ENCODE measurements at regions of chr16 and their contacts with region 1.

Region 1: GRCh38 chr16:67816240-67817031 is 9.7 kb downstream of the TSNAXIP1 start:
- DNase-seq: peak; percentile 91
- ATAC-seq: peak; percentile 98
- H3K4me3 Mint-ChIP-seq: no peak overlapping the region
- H3K27ac Mint-ChIP-seq: no peak overlapping the region
- H3K4me1 Mint-ChIP-seq: peaks cover 5% of the 10 kb centered on the region
- H3K27me3 Mint-ChIP-seq: peaks cover 5% of the 10 kb centered on the region

Region 2: DNA sequence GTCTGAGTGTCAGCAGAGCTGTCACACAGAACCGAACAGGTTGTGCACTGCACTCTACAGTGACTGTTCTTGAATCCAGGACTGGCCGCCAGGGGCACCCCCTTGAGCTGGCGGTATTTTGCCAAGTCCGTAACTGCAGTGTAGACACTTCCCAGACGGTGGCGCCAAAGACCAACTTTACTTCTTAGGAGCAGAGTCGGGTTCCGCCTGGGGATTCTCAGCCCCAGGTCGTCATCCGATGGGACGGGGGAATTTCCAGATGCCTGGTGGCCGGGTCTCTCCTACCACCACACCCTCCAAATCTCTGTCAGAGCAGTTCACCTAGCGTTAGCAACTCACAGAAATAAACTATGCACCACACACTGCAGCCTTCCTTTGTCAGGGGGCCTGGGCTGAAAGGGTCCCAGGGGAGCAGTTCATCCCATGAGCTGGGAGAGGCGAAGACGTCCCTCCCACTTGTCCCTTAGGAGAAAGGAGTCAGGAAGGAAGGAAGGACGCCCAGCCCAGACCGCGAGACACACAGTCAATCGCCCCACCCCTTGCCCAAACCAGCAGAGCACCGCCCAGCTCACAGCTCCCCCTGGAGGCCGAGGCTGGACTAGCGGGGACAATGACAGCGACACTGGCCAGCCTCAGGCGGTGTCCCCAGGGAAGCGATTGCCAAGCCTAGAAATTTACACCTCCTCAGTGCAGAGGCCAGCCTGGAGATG is 295.2 kb before region 1 on chr16:
- CTCF ChIA-PET with region 1: interaction called, 12 read pairs
- DNase-seq: peak; percentile 99
- ATAC-seq: peak; percentile 91
- H3K4me3 Mint-ChIP-seq: peak overlapping the region; percentile 81
- H3K27ac Mint-ChIP-seq: peak overlapping the region; percentile 96
- H3K4me1 Mint-ChIP-seq: peaks cover 36% of the 10 kb centered on the region
- H3K27me3 Mint-ChIP-seq: peaks cover 7% of the 10 kb centered on the region

Region 3: DNA sequence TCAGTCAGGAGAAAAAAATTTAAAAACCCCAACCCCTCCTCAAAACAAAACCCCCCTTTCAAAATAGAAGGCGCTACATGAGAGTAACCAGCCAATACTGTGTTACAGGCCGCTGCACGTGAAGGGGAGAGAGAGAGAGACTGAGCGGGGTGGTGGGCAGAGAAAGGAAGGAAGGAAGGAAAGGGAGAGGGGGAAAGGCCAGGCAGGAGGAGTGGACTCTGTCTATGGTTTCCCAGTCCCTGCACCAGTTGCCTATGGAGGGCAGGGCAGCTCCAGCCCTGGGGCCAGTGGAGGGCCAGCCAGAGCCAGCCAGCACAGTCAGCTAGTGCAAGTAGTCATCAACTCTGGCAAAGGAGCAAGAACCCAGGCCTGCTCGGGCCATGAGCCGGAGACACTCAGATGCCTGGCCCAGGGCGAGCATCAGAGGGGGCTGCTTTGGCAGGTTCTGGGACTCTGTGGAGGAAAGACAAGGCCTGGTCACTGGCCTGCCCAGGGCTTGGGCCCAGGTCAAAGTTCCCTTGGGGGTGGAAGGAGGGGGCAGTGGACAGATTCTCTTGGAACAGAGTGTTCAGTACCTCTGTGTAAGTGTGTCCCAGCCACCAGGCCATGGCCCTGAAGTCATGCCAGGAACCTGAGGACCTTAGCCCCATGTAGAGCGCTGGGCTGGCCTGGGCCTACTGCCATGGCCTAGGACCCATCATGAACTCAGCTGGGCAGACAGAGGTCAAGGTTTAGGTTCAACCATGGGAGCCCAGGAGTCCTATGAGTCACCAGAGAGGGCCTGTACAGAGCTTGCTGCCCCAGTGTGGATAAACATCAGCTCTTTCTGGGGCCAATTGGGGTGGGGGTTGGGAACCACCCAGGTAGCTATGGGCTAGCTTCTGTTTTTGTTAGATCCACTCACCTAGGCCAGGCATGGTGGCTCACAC is 90.1 kb before region 1 on chr16:
- CTCF ChIA-PET with region 1: interaction called, 10 read pairs
- DNase-seq: no peak
- ATAC-seq: no peak
- H3K4me3 Mint-ChIP-seq: no peak overlapping the region
- H3K27ac Mint-ChIP-seq: no peak overlapping the region
- H3K4me1 Mint-ChIP-seq: no peaks in the 10 kb centered on the region
- H3K27me3 Mint-ChIP-seq: no peaks in the 10 kb centered on the region

Region 4: GRCh38 chr16:67833418-67834241 is 17.2 kb after region 1 on chr16:
- CTCF ChIA-PET with region 1: interaction called, 73 read pairs
- DNase-seq: peak; percentile 97
- ATAC-seq: peak; percentile 99
- H3K4me3 Mint-ChIP-seq: peak overlapping the region; percentile 83
- H3K27ac Mint-ChIP-seq: peak overlapping the region; percentile 81
- H3K4me1 Mint-ChIP-seq: peaks cover 12% of the 10 kb centered on the region
- H3K27me3 Mint-ChIP-seq: no peaks in the 10 kb centered on the region

Region 5: GRCh38 chr16:67872786-67873537 is 56.5 kb after region 1 on chr16 and contains the start of gene EDC4:
- CTCF ChIA-PET with region 1: interaction called, 22 read pairs
- DNase-seq: peak; percentile 91
- ATAC-seq: peak; percentile 90
- H3K4me3 Mint-ChIP-seq: peak within 1 kb of the TSS; percentile 80
- H3K27ac Mint-ChIP-seq: peak within 1 kb of the TSS; percentile 90
- H3K4me1 Mint-ChIP-seq: peaks cover 31% of the 10 kb centered on the region
- H3K27me3 Mint-ChIP-seq: no peaks in the 10 kb centered on the region
- total RNA-seq, gene EDC4: 122 to 124 TPM

Region 6: GRCh38 chr16:67919622-67920221 is 103.3 kb after region 1 on chr16:
- CTCF ChIA-PET with region 1: interaction called, 53 read pairs
- DNase-seq: peak; percentile 43
- ATAC-seq: peak; percentile 32
- H3K4me3 Mint-ChIP-seq: no peak overlapping the region
- H3K27ac Mint-ChIP-seq: no peak overlapping the region
- H3K4me1 Mint-ChIP-seq: peaks cover 26% of the 10 kb centered on the region
- H3K27me3 Mint-ChIP-seq: no peaks in the 10 kb centered on the region

Region 7: GRCh38 chr16:67942200-67942509 is 125.7 kb after region 1 on chr16:
- CTCF ChIA-PET with region 1: interaction called, 35 read pairs
- DNase-seq: peak; percentile 59
- ATAC-seq: peak; percentile 60
- H3K4me3 Mint-ChIP-seq: no peak overlapping the region
- H3K27ac Mint-ChIP-seq: no peak overlapping the region
- H3K4me1 Mint-ChIP-seq: peaks cover 30% of the 10 kb centered on the region
- H3K27me3 Mint-ChIP-seq: no peaks in the 10 kb centered on the region